PC-3 (cell line): ENCODE measurements at regions of chr9 and their contacts with region 1.

Region 1: GRCh38 chr9:130042833-130043653 is at the start of gene FNBP1:
- DNase-seq: peak; percentile 68
- ATAC-seq: peak; percentile 68
- H3K4me3 ChIP-seq: peak within 1 kb of the TSS; percentile 85
- H3K27ac ChIP-seq: peak within 1 kb of the TSS; percentile 16; the same call in 1 of the 2 replicates
- H3K4me1 ChIP-seq: peaks cover 28% of the 10 kb centered on the region
- H3K27me3 ChIP-seq: no peaks in the 10 kb centered on the region
- CTCF ChIP-seq: no peak
- total RNA-seq, gene FNBP1: 30.8 and 39.6 TPM in 2 replicates

Region 2: GRCh38 chr9:129884220-129885017 is 158.6 kb before region 1 on chr9:
- CTCF ChIA-PET with region 1: no interaction called
- POLR2A ChIA-PET with region 1: no interaction called
- intact Hi-C with region 1: loop called (anchors 5 kb)
- DNase-seq: peak; percentile 87
- ATAC-seq: peak; percentile 82
- H3K4me3 ChIP-seq: peak overlapping the region; percentile 57
- H3K27ac ChIP-seq: no peak overlapping the region
- H3K4me1 ChIP-seq: peaks cover 24% of the 10 kb centered on the region
- H3K27me3 ChIP-seq: no peaks in the 10 kb centered on the region
- CTCF ChIP-seq: no peak

Region 3: DNA sequence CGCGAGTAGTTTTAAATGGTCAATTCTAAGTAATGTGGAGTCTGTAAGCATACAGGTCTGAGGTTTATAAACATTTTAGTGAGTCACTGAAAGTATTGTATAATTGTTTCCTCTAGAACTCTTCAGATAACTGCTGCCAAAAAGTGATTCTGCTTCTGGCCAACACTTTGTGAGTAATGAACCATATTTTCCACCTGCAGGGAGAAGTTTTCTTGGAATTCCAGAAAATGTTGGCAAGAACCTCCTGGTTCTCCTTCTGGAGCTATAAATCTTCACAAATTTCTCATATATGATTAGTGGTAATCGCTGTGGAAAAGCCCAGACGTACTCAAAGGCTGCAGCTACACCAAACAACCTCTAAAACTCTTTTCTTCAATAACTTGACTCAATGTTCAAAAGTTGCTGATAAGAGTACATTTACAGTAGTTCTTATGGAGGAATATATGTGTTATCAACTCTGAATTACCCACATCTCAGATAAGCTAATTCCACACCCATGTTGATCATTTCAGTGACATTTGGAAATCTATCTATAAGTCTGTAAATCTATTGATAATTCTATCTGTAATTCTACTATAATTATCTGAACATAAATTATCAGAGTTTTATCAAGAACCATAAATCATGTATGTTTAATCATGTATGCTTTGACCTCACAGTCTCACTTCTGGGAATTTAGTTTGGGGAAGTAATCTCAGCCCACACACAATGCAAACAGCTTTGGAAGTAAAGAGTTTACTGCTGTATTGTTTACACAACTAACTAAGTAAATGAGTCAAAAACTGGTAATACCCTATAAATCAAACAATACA is 74.1 kb before region 1 on chr9:
- CTCF ChIA-PET with region 1: no interaction called
- POLR2A ChIA-PET with region 1: no interaction called
- intact Hi-C with region 1: loop called (anchors 2 kb)
- DNase-seq: peak; percentile 89
- ATAC-seq: peak; percentile 70
- H3K4me3 ChIP-seq: no peak overlapping the region
- H3K27ac ChIP-seq: peak overlapping the region; percentile 95
- H3K4me1 ChIP-seq: peaks cover 36% of the 10 kb centered on the region
- H3K27me3 ChIP-seq: no peaks in the 10 kb centered on the region
- CTCF ChIP-seq: no peak